ENCODE measurements at regions of chr7 and their contacts with region 1.

Region 1: GRCh38 chr7:76314042-76314721 is 11.7 kb downstream of the HSPB1 start:
- DNase-seq: peak; percentile 85
- ATAC-seq: peak; percentile 58
- H3K4me3 ChIP-seq: no peak overlapping the region; a peak in 1 of 6 replicates
- H3K27ac ChIP-seq: no peak overlapping the region
- H3K4me1 ChIP-seq: peaks cover 42% of the 10 kb centered on the region
- H3K27me3 ChIP-seq: no peaks in the 10 kb centered on the region; a peak in 1 of 5 replicates
- CTCF ChIP-seq: peak; percentile 100
- EP300 ChIP-seq: no peak
- POLR2A ChIP-seq: no peak
- RAD21 ChIP-seq: peak; percentile 100

Region 2: GRCh38 chr7:76179686-76180085 is 134.5 kb before region 1 on chr7:
- CTCF ChIA-PET with region 1: interaction called, 57 read pairs
- POLR2A ChIA-PET with region 1: interaction called, 6 read pairs
- in situ Hi-C with region 1: loop called (anchors 5 kb)
- intact Hi-C with region 1: loop called (anchors 1 kb)
- DNase-seq: no peak
- ATAC-seq: no peak
- H3K4me3 ChIP-seq: no peak overlapping the region
- H3K27ac ChIP-seq: no peak overlapping the region
- H3K4me1 ChIP-seq: peaks cover 12% of the 10 kb centered on the region
- H3K27me3 ChIP-seq: no peaks in the 10 kb centered on the region; a peak in 2 of 5 replicates
- CTCF ChIP-seq: no peak
- EP300 ChIP-seq: no peak
- POLR2A ChIP-seq: no peak
- RAD21 ChIP-seq: no peak

Region 3: DNA sequence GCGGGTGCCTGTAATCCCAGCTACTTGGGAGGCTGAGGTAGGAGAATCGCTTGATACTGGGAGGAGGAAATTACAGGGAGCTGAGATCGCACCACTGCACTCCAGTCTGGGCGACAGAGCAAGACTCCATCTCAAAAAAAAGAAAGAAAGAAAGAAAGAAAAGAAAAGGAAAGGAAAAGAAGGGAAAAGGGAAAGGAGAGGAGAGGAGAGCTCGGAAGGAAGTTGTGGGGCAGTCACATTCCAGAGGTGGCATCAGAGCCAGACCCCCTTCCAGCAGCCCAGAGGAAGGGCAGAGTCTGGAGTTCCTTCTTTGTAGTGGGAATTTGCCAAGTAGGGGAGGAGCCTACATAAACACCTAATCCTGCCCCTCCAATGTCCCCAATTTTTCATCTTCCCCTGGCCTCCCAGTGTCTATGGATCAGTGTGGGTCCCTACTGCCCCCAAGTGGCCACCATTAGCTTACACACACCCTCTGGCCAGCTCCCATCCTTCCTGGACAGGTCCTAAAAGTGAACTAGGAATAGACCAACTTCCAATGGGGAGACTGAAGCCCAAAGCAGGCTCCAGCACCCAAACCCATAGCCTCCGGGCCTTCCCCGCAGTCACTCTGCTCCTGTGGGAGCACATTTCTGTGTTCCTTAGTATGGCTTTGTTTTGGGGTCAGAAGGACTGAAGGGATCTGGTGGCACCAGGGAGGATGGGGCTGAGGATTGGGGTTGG is 51.3 kb before region 1 on chr7:
- CTCF ChIA-PET with region 1: interaction called, 32 read pairs
- POLR2A ChIA-PET with region 1: interaction called, 3 read pairs
- in situ Hi-C with region 1: no loop called
- intact Hi-C with region 1: loop called (anchors 2 kb)
- DNase-seq: peak; percentile 68
- ATAC-seq: peak; percentile 75
- H3K4me3 ChIP-seq: no peak overlapping the region
- H3K27ac ChIP-seq: no peak overlapping the region
- H3K4me1 ChIP-seq: peaks cover 43% of the 10 kb centered on the region
- H3K27me3 ChIP-seq: no peaks in the 10 kb centered on the region; a peak in 2 of 5 replicates
- CTCF ChIP-seq: peak; percentile 94
- EP300 ChIP-seq: no peak
- POLR2A ChIP-seq: no peak
- RAD21 ChIP-seq: peak; percentile 92

Region 4: GRCh38 chr7:76291343-76292212 is 22.6 kb before region 1 on chr7:
- CTCF ChIA-PET with region 1: interaction called, 179 read pairs
- POLR2A ChIA-PET with region 1: interaction called, 19 read pairs
- in situ Hi-C with region 1: no loop called
- intact Hi-C with region 1: loop called (anchors 1 kb)
- DNase-seq: peak; percentile 88
- ATAC-seq: peak; percentile 85
- H3K4me3 ChIP-seq: peak overlapping the region; percentile 65 to 75 (median 66)
- H3K27ac ChIP-seq: peak overlapping the region; percentile 89
- H3K4me1 ChIP-seq: peaks cover 66% of the 10 kb centered on the region
- H3K27me3 ChIP-seq: peaks cover 0 to 6% of the 10 kb centered on the region in 2 experiments; a peak in 3 of 5 replicates
- CTCF ChIP-seq: peak; percentile 97
- EP300 ChIP-seq: peak in 1 of 2 experiments; percentile 49; a peak in 2 of 4 replicates
- POLR2A ChIP-seq: peak; percentile 53 to 74
- RAD21 ChIP-seq: peak; percentile 97

Region 5: DNA sequence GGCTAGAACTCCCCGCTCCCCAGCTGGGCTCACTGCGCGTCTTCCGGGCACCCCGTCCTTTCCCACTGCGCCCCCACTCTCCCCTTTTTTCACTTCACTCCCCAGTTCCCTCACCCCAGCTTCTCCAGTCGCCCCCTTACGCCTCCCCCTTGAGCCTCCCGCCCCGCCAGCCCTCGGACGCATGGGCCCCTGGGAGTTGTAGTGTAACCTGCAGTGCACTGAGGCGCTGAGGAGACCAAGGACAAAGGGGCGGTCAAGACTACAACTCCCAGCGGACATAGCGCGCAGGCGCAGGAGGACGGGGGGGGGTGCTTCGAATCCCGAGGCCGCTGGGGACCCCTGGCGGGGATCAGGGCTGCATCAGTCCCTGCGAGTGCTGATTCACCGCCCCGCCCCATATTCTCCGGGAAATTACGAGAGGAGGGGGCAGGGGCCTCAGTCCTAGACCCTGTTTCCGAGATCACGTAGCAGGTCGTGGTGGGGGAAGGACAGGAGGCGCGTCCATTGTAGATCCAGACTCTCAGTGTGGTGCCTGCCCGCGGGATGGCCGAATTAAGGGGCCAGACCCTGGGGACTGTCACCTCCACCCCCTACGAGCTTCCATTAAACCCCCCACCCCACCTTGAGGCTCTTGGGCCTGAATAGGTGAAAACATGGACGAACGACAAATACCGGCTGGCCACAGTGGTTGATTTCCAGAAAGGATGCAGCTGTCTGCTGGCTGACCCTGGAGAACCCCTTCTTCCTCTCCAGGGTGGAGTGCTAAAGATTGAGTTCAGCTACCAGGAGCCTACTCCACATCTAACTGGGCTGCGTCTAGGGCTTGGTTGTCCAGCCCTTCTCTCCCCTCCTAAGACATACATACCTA is 45.2 kb after region 1 on chr7:
- CTCF ChIA-PET with region 1: interaction called, 7 read pairs
- POLR2A ChIA-PET with region 1: interaction called, 16 read pairs
- in situ Hi-C with region 1: no loop called
- intact Hi-C with region 1: loop called (anchors 1 kb)
- DNase-seq: peak; percentile 97
- ATAC-seq: peak; percentile 93
- H3K4me3 ChIP-seq: peak overlapping the region; percentile 92 to 99 (median 94)
- H3K27ac ChIP-seq: peak overlapping the region; percentile 93
- H3K4me1 ChIP-seq: peaks cover 47% of the 10 kb centered on the region
- H3K27me3 ChIP-seq: no peaks in the 10 kb centered on the region; a peak in 1 of 5 replicates
- CTCF ChIP-seq: peak; percentile 95
- EP300 ChIP-seq: peak; percentile 50 to 69; a peak in 3 of 4 replicates
- POLR2A ChIP-seq: peak; percentile 70 to 84
- RAD21 ChIP-seq: peak; percentile 83